Posterior vena cava (tissue), 2 donors: ENCODE measurements at regions of chr10 and their contacts with region 1.

Region 1: GRCh38 chr10:77391605-77392235 is 245.9 kb downstream of the KCNMA1 start:
- DNase-seq: peak; percentile 92

Region 2: DNA sequence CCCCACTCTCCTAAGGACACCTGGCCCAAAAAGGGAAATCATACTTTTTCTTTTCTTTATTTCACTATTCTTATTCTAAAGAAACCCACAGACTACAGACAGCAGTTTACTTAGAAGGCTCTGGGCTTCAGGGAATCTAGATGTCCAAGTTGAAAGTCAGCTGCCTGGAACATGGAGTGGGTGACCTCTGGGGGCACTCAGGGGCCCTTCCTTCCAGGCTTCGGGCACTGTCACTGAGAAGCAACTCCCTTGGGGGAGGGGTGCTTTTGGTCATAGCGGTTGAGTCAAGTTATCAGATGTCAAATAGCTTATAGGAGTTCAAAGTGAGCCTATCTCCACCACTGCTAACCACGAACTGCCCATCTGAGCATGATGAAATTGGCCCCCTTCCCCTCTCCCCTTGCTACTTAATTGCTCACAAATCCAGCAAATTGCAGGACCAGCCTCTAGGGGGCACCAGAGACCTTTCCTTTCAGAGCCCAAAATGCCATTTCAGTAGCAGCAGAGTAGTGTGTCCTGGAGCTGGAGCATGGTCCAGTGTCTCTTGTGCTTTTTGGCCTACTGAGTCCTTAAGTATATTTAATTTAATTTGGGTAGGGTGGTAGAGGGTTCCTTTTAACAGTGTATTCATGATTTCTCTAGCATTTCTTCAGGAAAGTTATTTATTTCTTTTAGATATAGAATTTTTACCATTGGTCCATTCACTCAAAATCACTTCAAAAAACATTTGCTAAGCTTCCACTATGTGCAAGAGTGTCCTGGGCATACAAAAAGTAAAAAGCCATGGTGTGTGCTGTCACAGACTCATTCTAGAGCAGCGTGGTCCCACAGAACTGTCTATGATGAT is 217.9 kb before region 1 on chr10:
- intact Hi-C with region 1: loop called (anchors 5 to 10 kb)
- DNase-seq: peak; percentile 85

Region 3: DNA sequence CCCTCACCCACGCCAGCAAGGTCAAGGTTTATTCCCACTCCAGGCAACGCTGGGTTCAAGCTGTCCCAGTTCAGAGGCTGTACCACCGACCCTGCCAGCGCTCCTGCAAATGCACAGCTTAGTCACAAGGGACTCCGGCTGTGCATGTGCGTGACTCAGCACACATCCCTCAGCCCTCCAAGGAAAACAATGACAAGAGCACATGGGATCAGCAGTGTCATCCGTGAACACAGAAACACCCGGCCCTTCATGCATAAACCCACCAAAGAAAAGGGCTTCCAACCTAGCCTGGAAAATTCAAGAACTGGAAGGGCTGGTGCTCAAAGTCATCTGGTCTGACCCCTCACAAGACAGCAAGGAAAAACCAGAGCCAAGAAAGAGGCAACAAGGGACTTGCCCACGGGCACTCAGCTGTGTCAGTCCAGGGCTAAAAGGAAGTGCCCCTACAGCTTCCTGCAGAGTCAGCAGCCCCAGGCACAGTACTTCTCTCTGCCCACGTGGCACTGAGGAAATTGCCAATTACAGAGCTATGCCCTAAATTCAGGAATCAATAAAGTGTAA is 139.8 kb after region 1 on chr10:
- intact Hi-C with region 1: no loop called
- DNase-seq: peak; percentile 86